MCF 10A (cell line): ENCODE measurements at regions of chr1 and their contacts with region 1.

Region 1: GRCh38 chr1:208652296-208653160 is 408.3 kb upstream of the PLXNA2 start:
- DNase-seq: peak; percentile 83
- H3K4me3 Mint-ChIP-seq: no peak overlapping the region
- H3K27ac Mint-ChIP-seq: no peak overlapping the region
- H3K4me1 Mint-ChIP-seq: peaks cover 13% of the 10 kb centered on the region
- H3K27me3 Mint-ChIP-seq: peaks cover 21% of the 10 kb centered on the region
- CTCF ChIP-seq: peak; percentile 98

Region 2: GRCh38 chr1:208615371-208615770 is 37.2 kb before region 1 on chr1:
- CTCF ChIA-PET with region 1: interaction called, 13 read pairs
- POLR2A ChIA-PET with region 1: no interaction called
- intact Hi-C with region 1: no loop called
- DNase-seq: no peak
- H3K4me3 Mint-ChIP-seq: no peak overlapping the region
- H3K27ac Mint-ChIP-seq: no peak overlapping the region
- H3K4me1 Mint-ChIP-seq: no peaks in the 10 kb centered on the region
- H3K27me3 Mint-ChIP-seq: no peaks in the 10 kb centered on the region
- CTCF ChIP-seq: no peak

Region 3: GRCh38 chr1:208807446-208808127 is 155.1 kb after region 1 on chr1:
- CTCF ChIA-PET with region 1: interaction called, 9 read pairs
- POLR2A ChIA-PET with region 1: interaction called, 5 read pairs
- intact Hi-C with region 1: loop called (anchors 1 kb)
- DNase-seq: peak; percentile 96
- H3K4me3 Mint-ChIP-seq: no peak overlapping the region
- H3K27ac Mint-ChIP-seq: peak overlapping the region; percentile 91
- H3K4me1 Mint-ChIP-seq: peaks cover 37% of the 10 kb centered on the region
- H3K27me3 Mint-ChIP-seq: no peaks in the 10 kb centered on the region
- CTCF ChIP-seq: no peak

Region 4: GRCh38 chr1:209029737-209030136 is 377.2 kb after region 1 on chr1:
- CTCF ChIA-PET with region 1: interaction called, 5 read pairs
- POLR2A ChIA-PET with region 1: no interaction called
- intact Hi-C with region 1: loop called (anchors 1 kb)
- DNase-seq: peak; percentile 43
- H3K4me3 Mint-ChIP-seq: no peak overlapping the region
- H3K27ac Mint-ChIP-seq: no peak overlapping the region
- H3K4me1 Mint-ChIP-seq: peaks cover 5% of the 10 kb centered on the region
- H3K27me3 Mint-ChIP-seq: no peaks in the 10 kb centered on the region
- CTCF ChIP-seq: no peak

Region 5: DNA sequence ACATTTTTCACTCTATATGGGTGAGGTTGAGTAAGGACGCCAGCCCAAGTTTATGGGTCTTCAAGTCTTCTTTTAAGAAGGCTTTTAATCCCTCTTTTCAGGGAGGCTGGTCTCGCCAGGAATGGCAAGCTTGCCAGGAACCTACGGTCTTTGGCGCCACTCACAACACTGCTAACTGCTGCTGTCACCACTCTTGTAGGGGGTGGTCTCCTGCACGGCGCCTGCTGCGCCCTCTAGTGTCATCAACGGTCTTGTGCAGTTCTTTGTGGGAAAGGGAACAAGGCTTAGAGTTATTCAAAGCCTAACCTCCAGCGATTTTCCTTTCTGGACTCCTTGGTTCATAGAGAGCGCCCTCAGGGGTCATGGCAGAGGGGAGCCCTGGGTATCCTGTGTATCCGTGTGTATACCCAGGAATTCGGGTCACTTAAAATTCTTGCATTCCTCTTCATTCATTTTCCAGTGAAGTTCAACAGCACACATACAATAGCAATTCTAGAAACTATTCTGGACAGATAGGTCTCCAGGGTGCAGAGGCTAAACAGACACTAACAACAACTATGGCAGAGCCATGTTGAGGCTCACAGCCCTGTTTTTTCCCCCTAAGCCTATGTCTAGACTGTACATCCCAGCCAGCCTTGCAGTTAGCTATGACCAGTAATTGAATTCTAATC is 538.2 kb after region 1 on chr1:
- CTCF ChIA-PET with region 1: interaction called, 19 read pairs
- POLR2A ChIA-PET with region 1: no interaction called
- intact Hi-C with region 1: loop called (anchors 1 kb)
- DNase-seq: peak; percentile 85
- H3K4me3 Mint-ChIP-seq: no peak overlapping the region
- H3K27ac Mint-ChIP-seq: no peak overlapping the region
- H3K4me1 Mint-ChIP-seq: no peaks in the 10 kb centered on the region
- H3K27me3 Mint-ChIP-seq: no peaks in the 10 kb centered on the region
- CTCF ChIP-seq: peak; percentile 96